GM12878 (cell line): ENCODE measurements at regions of chr7 and their contacts with region 1.

Region 1: DNA sequence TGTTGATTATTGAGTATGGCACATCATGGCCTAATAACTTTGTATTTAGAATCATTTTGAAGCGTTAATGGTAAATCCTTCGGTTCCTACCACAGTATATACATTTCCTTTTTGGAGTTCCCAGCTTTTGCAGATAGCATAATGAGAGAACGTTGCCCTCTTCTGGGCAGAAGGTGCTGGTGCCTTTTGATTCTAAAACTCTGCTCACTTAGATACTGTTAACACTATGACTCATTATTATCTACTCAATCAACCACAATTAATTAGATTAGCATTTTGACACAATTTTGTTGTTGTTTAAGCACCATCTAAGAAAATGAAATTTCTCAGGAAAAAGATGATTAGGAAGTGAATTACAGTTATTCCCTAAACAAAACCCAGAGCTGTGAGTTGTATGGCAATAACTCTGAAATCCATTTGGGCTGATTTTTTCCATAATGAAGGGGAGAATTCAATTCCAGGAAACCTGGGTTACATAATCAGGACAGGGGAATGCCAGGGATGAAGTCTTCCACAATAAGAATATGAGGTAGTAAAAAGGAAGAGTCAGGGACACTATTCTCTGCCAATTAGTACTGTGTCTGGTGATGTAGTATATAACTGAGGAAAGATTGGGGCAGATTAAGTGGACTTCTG is 11.5 kb upstream of the DLD start:
- DNase-seq: no peak
- ATAC-seq: peak; percentile 87
- H3K4me3 ChIP-seq: no peak overlapping the region
- H3K27ac ChIP-seq: no peak overlapping the region
- H3K4me1 ChIP-seq: no peaks in the 10 kb centered on the region
- H3K27me3 ChIP-seq: no peaks in the 10 kb centered on the region; a peak in 1 of 4 replicates
- CTCF ChIP-seq: peak; percentile 70 to 78 (median 77)
- EP300 ChIP-seq: no peak
- POLR2A ChIP-seq: no peak
- RAD21 ChIP-seq: peak; percentile 68

Region 2: DNA sequence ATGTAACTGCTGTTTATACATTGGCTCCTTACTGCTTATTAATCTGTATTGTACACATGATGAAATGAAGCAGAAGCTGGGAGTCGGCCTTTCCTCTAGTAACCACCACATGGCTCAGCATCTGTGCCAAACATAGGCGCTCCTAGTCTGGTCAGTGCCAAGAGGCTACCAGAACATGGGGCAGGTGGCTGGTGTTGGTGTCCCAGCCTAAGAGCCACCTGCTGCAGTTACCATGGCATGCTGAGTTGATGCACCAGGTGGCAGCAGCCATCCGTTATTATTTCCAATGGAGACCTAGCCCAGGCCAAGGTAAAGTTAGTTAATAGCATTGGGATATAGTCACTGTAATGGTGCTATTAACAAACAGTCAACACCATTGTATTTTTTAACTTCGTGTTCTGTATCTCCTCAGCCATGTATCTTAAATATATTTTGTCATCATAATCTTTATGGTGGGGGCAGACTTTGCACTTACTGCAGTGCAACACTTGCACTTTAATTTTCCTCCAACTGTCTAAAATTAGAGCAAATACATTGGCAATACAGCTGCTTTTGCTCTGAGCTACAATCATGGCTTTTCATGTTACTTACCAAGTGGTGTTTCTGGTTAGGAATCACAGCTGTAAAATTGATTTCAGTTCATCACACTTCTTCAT is 677.6 kb before region 1 on chr7:
- CTCF ChIA-PET with region 1: interaction called, 4 read pairs
- POLR2A ChIA-PET with region 1: no interaction called
- RAD21 ChIA-PET with region 1: interaction called, 3 read pairs
- SMC1A ChIA-PET with region 1: interaction called, 3 read pairs
- in situ Hi-C with region 1: no loop called
- intact Hi-C with region 1: loop called (anchors 5 kb)
- DNase-seq: no peak
- ATAC-seq: peak; percentile 92
- H3K4me3 ChIP-seq: no peak overlapping the region
- H3K27ac ChIP-seq: no peak overlapping the region
- H3K4me1 ChIP-seq: no peaks in the 10 kb centered on the region
- H3K27me3 ChIP-seq: no peaks in the 10 kb centered on the region
- CTCF ChIP-seq: peak; percentile 38 to 60 (median 53); a peak in 5 of 6 replicates
- EP300 ChIP-seq: no peak
- POLR2A ChIP-seq: no peak
- RAD21 ChIP-seq: peak; percentile 66

Region 3: GRCh38 chr7:107628461-107629064 is 251.0 kb before region 1 on chr7:
- CTCF ChIA-PET with region 1: no interaction called
- POLR2A ChIA-PET with region 1: no interaction called
- RAD21 ChIA-PET with region 1: no interaction called
- SMC1A ChIA-PET with region 1: no interaction called
- in situ Hi-C with region 1: no loop called
- intact Hi-C with region 1: no loop called
- DNase-seq: no peak
- ATAC-seq: no peak
- H3K4me3 ChIP-seq: no peak overlapping the region
- H3K27ac ChIP-seq: no peak overlapping the region
- H3K4me1 ChIP-seq: peaks cover 4% of the 10 kb centered on the region
- H3K27me3 ChIP-seq: no peaks in the 10 kb centered on the region
- CTCF ChIP-seq: no peak
- EP300 ChIP-seq: no peak
- POLR2A ChIP-seq: no peak
- RAD21 ChIP-seq: no peak

Region 4: GRCh38 chr7:107687656-107688055 is 191.9 kb before region 1 on chr7:
- CTCF ChIA-PET with region 1: no interaction called
- POLR2A ChIA-PET with region 1: no interaction called
- RAD21 ChIA-PET with region 1: no interaction called
- SMC1A ChIA-PET with region 1: no interaction called
- in situ Hi-C with region 1: no loop called
- intact Hi-C with region 1: no loop called
- DNase-seq: no peak
- ATAC-seq: no peak
- H3K4me3 ChIP-seq: no peak overlapping the region
- H3K27ac ChIP-seq: no peak overlapping the region
- H3K4me1 ChIP-seq: no peaks in the 10 kb centered on the region
- H3K27me3 ChIP-seq: peaks cover 2 to 3% of the 10 kb centered on the region in 2 experiments; a peak in 3 of 4 replicates
- CTCF ChIP-seq: no peak
- EP300 ChIP-seq: no peak
- POLR2A ChIP-seq: no peak
- RAD21 ChIP-seq: no peak

Region 5: DNA sequence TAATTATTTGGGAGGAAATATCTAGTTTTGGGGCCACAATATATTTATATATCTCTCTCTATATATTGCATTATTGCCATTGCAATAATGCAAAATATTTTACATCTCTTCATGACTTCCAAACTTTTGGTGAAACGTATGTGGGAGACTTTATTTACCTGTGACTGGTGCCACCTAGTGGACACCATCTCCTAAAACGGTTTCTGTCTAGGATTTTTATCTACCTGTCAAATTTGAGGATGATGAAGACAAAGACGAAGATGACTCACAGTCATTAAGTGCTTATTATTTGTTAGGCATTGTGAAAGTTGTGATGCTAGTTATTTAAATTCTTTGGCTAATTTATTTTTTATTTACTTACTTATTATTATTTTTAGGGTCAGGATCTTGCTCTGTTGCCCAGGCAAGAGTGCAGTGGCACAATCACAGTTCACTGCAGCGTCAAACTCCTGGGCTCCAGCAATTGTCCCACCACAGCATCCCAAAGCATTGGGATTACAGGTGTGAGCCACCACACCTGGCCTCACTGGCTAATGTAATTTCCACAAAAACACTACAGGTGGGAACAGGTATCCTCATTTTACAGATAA is 154.3 kb before region 1 on chr7:
- CTCF ChIA-PET with region 1: interaction called, 10 read pairs
- POLR2A ChIA-PET with region 1: no interaction called
- RAD21 ChIA-PET with region 1: interaction called, 3 read pairs
- SMC1A ChIA-PET with region 1: interaction called, 3 read pairs
- in situ Hi-C with region 1: no loop called
- intact Hi-C with region 1: no loop called
- DNase-seq: peak; percentile 12
- ATAC-seq: peak; percentile 61
- H3K4me3 ChIP-seq: no peak overlapping the region
- H3K27ac ChIP-seq: no peak overlapping the region
- H3K4me1 ChIP-seq: no peaks in the 10 kb centered on the region
- H3K27me3 ChIP-seq: no peaks in the 10 kb centered on the region
- CTCF ChIP-seq: peak; percentile 47 to 75 (median 54)
- EP300 ChIP-seq: no peak
- POLR2A ChIP-seq: no peak
- RAD21 ChIP-seq: peak; percentile 81

Region 6: DNA sequence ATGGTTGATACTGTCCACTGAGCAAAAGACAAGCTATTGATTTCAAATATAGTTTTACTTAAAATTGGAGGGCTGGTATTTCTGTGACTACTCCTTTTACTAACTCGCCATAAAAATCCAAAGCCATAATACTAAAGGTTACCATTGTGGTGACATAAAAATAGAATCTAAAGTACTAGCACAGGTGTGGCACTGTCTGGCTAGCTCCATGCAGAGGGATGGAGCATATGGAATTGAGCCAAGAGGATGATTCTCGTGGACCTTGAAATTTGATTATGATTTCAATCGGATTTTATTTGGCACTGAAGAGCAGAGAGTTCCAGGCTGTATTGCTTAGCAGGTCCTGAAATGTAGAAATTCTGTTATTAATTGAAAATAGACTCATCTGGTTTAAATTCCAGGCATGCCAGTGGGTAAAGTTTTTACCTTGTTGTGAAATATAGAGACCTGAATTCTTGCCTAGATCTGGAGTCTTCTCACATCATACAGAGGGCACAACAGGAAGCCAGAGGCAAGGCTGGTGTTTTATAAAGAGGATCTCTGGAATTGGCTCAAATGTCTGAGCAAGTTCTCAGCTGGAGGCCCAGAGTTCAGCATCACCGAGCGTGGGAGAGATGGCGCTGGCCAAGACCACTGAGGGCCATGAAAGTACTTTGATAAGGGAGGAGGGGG is 18.4 kb before region 1 on chr7:
- CTCF ChIA-PET with region 1: interaction called, 12 read pairs
- POLR2A ChIA-PET with region 1: no interaction called
- RAD21 ChIA-PET with region 1: no interaction called
- SMC1A ChIA-PET with region 1: no interaction called
- in situ Hi-C with region 1: no loop called
- intact Hi-C with region 1: no loop called
- DNase-seq: no peak
- ATAC-seq: no peak
- H3K4me3 ChIP-seq: no peak overlapping the region
- H3K27ac ChIP-seq: no peak overlapping the region
- H3K4me1 ChIP-seq: no peaks in the 10 kb centered on the region
- H3K27me3 ChIP-seq: peaks cover 0 to 3% of the 10 kb centered on the region in 2 experiments; a peak in 1 of 4 replicates
- CTCF ChIP-seq: no peak
- EP300 ChIP-seq: no peak
- POLR2A ChIP-seq: no peak
- RAD21 ChIP-seq: no peak

Region 7: DNA sequence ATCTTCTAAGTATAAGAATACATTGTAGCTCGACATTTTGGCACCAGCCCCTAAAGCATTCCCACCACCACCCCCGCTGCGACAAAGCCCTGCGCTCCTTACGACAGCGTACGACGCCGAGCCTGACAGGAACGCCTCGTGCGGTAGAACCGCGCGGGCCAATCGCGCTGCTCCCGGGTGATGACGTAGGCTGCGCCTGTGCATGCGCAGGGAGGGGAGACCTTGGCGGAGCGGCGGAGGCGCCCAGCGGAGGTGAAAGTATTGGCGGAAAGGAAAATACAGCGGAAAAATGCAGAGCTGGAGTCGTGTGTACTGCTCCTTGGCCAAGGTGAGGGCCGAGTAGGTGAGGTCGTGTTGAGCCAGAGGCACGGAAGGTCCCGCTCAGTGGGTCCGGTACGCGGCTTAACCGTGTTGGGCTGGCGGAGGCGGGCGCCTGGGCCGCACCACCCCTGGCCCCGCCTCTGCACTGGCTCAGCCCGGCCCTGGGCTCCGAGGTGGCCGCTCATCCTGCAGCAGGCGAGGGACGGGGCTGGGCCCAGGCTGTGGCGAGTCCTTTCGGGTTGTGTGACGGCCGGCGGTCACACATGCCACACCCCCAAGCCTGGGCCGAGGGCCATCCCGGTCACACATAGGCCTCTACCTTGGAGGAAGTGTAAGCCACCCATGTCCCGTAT is 11.6 kb after region 1 on chr7 and contains the start of gene DLD:
- CTCF ChIA-PET with region 1: interaction called, 61 read pairs
- POLR2A ChIA-PET with region 1: no interaction called
- RAD21 ChIA-PET with region 1: interaction called, 3 read pairs
- SMC1A ChIA-PET with region 1: interaction called, 7 read pairs
- in situ Hi-C with region 1: no loop called
- intact Hi-C with region 1: no loop called
- DNase-seq: peak; percentile 74
- ATAC-seq: peak; percentile 95
- H3K4me3 ChIP-seq: peak within 1 kb of the TSS; percentile 91
- H3K27ac ChIP-seq: peak within 1 kb of the TSS; percentile 73
- H3K4me1 ChIP-seq: no peaks in the 10 kb centered on the region; the same call in 1 of the 2 replicates
- H3K27me3 ChIP-seq: no peaks in the 10 kb centered on the region
- CTCF ChIP-seq: no peak
- EP300 ChIP-seq: no peak
- POLR2A ChIP-seq: peak; percentile 82
- RAD21 ChIP-seq: no peak
- polyA plus RNA-seq, gene DLD: 147 to 215 TPM

Region 8: GRCh38 chr7:108146070-108146837 is 266.7 kb after region 1 on chr7:
- CTCF ChIA-PET with region 1: interaction called, 16 read pairs
- POLR2A ChIA-PET with region 1: no interaction called
- RAD21 ChIA-PET with region 1: no interaction called
- SMC1A ChIA-PET with region 1: interaction called, 5 read pairs
- in situ Hi-C with region 1: no loop called
- intact Hi-C with region 1: loop called (anchors 5 kb)
- DNase-seq: peak; percentile 12
- ATAC-seq: peak; percentile 86
- H3K4me3 ChIP-seq: no peak overlapping the region
- H3K27ac ChIP-seq: no peak overlapping the region
- H3K4me1 ChIP-seq: no peaks in the 10 kb centered on the region
- H3K27me3 ChIP-seq: peaks cover 0 to 4% of the 10 kb centered on the region in 2 experiments; a peak in 1 of 4 replicates
- CTCF ChIP-seq: peak; percentile 81 to 94 (median 89)
- EP300 ChIP-seq: no peak
- POLR2A ChIP-seq: no peak
- RAD21 ChIP-seq: peak; percentile 100